Transverse colon (tissue), 4 donors: ENCODE measurements at regions of chr3 and their contacts with region 1.

Region 1: GRCh38 chr3:136075218-136075808 is 109.8 kb downstream of the PPP2R3A start:
- DNase-seq: peak; percentile 75
- H3K4me3 ChIP-seq: no peak overlapping the region
- H3K27ac ChIP-seq: no peak overlapping the region
- H3K4me1 ChIP-seq: peaks cover 0 to 5% (median 0%) of the 10 kb centered on the region in 4 donors
- H3K27me3 ChIP-seq: no peaks in the 10 kb centered on the region
- CTCF ChIP-seq: peak; percentile 91 to 95 (median 94)
- EP300 ChIP-seq: no peak
- POLR2A ChIP-seq: no peak

Region 2: DNA sequence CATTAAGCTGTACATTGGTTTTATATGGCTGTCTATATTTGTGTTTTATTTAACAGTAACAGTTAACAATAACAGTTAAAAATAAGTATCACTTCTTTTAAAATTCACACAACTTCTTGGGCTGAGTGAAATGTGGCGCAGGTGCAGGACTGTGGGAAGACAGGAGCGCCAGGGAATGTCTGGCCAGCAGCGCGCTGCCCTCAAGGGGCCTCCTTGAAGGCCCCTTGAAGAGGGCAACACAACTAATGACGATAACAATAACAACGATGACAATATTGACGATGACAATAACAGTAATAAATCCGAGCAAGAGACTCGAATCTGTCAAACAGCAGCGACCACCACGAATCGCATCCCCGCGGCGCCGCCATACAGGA is 110.2 kb before region 1 on chr3:
- in situ Hi-C with region 1: no loop called
- intact Hi-C with region 1: no loop called
- DNase-seq: no peak
- H3K4me3 ChIP-seq: peak overlapping the region in 3 of 4 donors; percentile 79 to 95 (median 85)
- H3K27ac ChIP-seq: peak overlapping the region; percentile 90 to 98 (median 94)
- H3K4me1 ChIP-seq: peaks cover 0 to 36% (median 30%) of the 10 kb centered on the region in 4 donors
- H3K27me3 ChIP-seq: no peaks in the 10 kb centered on the region
- CTCF ChIP-seq: no peak
- EP300 ChIP-seq: no peak
- POLR2A ChIP-seq: no peak

Region 3: GRCh38 chr3:136018876-136019275 is 56.4 kb before region 1 on chr3:
- in situ Hi-C with region 1: no loop called
- intact Hi-C with region 1: no loop called
- DNase-seq: no peak
- H3K4me3 ChIP-seq: no peak overlapping the region
- H3K27ac ChIP-seq: no peak overlapping the region
- H3K4me1 ChIP-seq: peaks cover 0 to 14% (median 2%) of the 10 kb centered on the region in 4 donors
- H3K27me3 ChIP-seq: no peaks in the 10 kb centered on the region
- CTCF ChIP-seq: no peak
- EP300 ChIP-seq: no peak
- POLR2A ChIP-seq: no peak

Region 4: DNA sequence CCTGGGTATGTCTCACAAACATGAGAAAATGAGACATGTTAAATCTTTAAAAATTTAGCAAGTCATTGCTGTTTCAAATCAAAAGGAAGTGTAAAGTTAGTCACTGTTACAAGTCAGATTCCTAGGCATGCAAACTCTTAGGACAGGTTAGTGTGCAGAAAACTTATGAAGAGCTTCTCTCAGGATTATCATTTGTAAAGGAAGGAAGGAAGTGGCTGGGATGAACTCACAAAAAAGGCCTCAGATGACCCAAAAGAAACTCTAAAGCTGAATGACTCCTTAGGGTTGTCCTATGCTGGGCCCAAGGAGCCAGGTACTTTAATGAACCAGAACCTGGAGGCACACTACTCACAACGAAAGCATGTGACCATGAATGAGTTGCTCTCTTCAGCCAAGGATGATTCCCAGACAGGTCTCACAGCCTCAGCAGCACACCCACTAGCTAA is 95.8 kb after region 1 on chr3:
- in situ Hi-C with region 1: no loop called
- intact Hi-C with region 1: no loop called
- DNase-seq: no peak
- H3K4me3 ChIP-seq: no peak overlapping the region
- H3K27ac ChIP-seq: no peak overlapping the region
- H3K4me1 ChIP-seq: peaks cover 0 to 49% (median 24%) of the 10 kb centered on the region in 4 donors
- H3K27me3 ChIP-seq: no peaks in the 10 kb centered on the region
- CTCF ChIP-seq: no peak
- EP300 ChIP-seq: no peak
- POLR2A ChIP-seq: no peak

Region 5: GRCh38 chr3:136250226-136250902 is 175.1 kb after region 1 on chr3 and contains the start of gene PCCB:
- in situ Hi-C with region 1: loop called (anchors 10 to 25 kb)
- intact Hi-C with region 1: loop called (anchors 2 kb)
- DNase-seq: peak; percentile 96
- H3K4me3 ChIP-seq: peak within 1 kb of the TSS; percentile 41 to 66 (median 56)
- H3K27ac ChIP-seq: peak within 1 kb of the TSS; percentile 87 to 95 (median 92)
- H3K4me1 ChIP-seq: peaks cover 7 to 21% (median 14%) of the 10 kb centered on the region in 4 donors
- H3K27me3 ChIP-seq: no peaks in the 10 kb centered on the region
- CTCF ChIP-seq: peak; percentile 80 to 100 (median 90)
- EP300 ChIP-seq: no peak
- POLR2A ChIP-seq: peak; percentile 73
- total RNA-seq, gene PCCB: 5.2 to 63.1 (median 48.0) TPM

Region 6: GRCh38 chr3:136385457-136385856 is 310.1 kb after region 1 on chr3:
- in situ Hi-C with region 1: loop called in 2 of 4 experiments (anchors 10 to 25 kb)
- intact Hi-C with region 1: no loop called
- DNase-seq: no peak
- H3K4me3 ChIP-seq: no peak overlapping the region
- H3K27ac ChIP-seq: no peak overlapping the region
- H3K4me1 ChIP-seq: no peaks in the 10 kb centered on the region
- H3K27me3 ChIP-seq: no peaks in the 10 kb centered on the region
- CTCF ChIP-seq: no peak
- EP300 ChIP-seq: no peak
- POLR2A ChIP-seq: no peak

Region 7: GRCh38 chr3:136728918-136729317 is 653.6 kb after region 1 on chr3:
- in situ Hi-C with region 1: loop called in 2 of 4 experiments (anchors 25 kb)
- intact Hi-C with region 1: no loop called
- DNase-seq: no peak
- H3K4me3 ChIP-seq: no peak overlapping the region
- H3K27ac ChIP-seq: peak overlapping the region in 3 of 4 donors; percentile 45 to 64 (median 49)
- H3K4me1 ChIP-seq: peaks cover 25 to 80% (median 43%) of the 10 kb centered on the region in 4 donors
- H3K27me3 ChIP-seq: no peaks in the 10 kb centered on the region
- CTCF ChIP-seq: no peak
- EP300 ChIP-seq: no peak
- POLR2A ChIP-seq: no peak

Region 8: GRCh38 chr3:136752422-136753325 is 677.4 kb after region 1 on chr3:
- in situ Hi-C with region 1: loop called in 3 of 4 experiments (anchors 10 to 25 kb)
- intact Hi-C with region 1: no loop called
- DNase-seq: peak; percentile 99
- H3K4me3 ChIP-seq: peak overlapping the region; percentile 1 to 93 (median 90)
- H3K27ac ChIP-seq: peak overlapping the region; percentile 88 to 99 (median 96)
- H3K4me1 ChIP-seq: peaks cover 8 to 33% (median 28%) of the 10 kb centered on the region in 4 donors
- H3K27me3 ChIP-seq: no peaks in the 10 kb centered on the region
- CTCF ChIP-seq: peak in 1 of 5 experiments; percentile 21
- EP300 ChIP-seq: no peak
- POLR2A ChIP-seq: peak; percentile 90

Region 9: DNA sequence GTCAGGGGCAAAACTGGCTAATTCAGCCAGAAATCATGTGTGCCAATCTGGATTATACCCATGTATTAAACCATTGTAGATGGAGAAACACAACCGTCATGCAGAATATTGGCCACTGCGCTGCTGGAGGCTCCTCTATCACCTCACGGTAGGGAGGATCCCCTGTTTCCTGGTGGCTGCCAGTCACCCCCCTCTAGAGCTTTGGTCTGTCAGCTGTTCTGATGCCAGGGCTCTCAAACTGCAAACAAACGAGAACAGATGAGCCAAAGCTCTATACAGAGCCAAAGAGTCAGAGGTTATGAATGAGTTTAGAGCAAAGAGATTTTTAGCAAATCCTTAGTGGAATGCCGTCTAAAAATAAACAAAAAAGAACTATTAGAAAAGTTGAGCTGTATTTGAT is 945.0 kb after region 1 on chr3:
- in situ Hi-C with region 1: loop called (anchors 5 to 25 kb)
- intact Hi-C with region 1: no loop called
- DNase-seq: no peak
- H3K4me3 ChIP-seq: no peak overlapping the region
- H3K27ac ChIP-seq: no peak overlapping the region
- H3K4me1 ChIP-seq: no peaks in the 10 kb centered on the region
- H3K27me3 ChIP-seq: no peaks in the 10 kb centered on the region
- CTCF ChIP-seq: no peak
- EP300 ChIP-seq: no peak
- POLR2A ChIP-seq: no peak